ENCODE measurements at regions of chr4 and their contacts with region 1.

Region 1: GRCh38 chr4:89365776-89366175 is 58.2 kb upstream of the GPRIN3 start:
- DNase-seq: no peak
- H3K4me3 Mint-ChIP-seq: no peak overlapping the region
- H3K27ac Mint-ChIP-seq: no peak overlapping the region
- H3K4me1 Mint-ChIP-seq: peaks cover 10% of the 10 kb centered on the region
- H3K27me3 Mint-ChIP-seq: no peaks in the 10 kb centered on the region

Region 2: GRCh38 chr4:89307446-89308160 is 58.2 kb before region 1 on chr4 and contains the start of gene GPRIN3:
- intact Hi-C with region 1: loop called (anchors 5 kb)
- DNase-seq: peak; percentile 90
- H3K4me3 Mint-ChIP-seq: peak within 1 kb of the TSS; percentile 89
- H3K27ac Mint-ChIP-seq: peak within 1 kb of the TSS; percentile 95
- H3K4me1 Mint-ChIP-seq: peaks cover 56% of the 10 kb centered on the region
- H3K27me3 Mint-ChIP-seq: no peaks in the 10 kb centered on the region
- total RNA-seq, gene GPRIN3: 26.2 and 26.8 TPM in 2 replicates

Region 3: DNA sequence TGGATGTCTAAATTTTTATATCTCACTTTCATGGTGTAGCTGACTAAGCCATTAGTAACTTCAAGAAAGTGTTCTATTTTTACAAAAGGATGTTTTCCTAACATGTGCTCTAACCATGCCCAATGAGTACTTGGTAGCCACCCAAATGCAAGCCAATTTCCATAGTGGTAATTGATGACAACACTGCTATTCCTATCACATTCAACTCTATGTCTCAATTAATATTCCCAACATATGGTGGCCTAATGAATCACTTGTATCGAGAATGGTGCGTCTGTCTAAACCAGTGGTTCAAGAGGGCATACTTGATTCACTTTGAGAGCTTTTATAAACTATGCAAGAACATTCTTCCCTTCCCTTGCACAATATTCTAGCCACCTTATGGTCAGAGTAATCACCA is 54.7 kb after region 1 on chr4:
- intact Hi-C with region 1: loop called (anchors 10 kb)
- DNase-seq: no peak
- H3K4me3 Mint-ChIP-seq: no peak overlapping the region
- H3K27ac Mint-ChIP-seq: no peak overlapping the region
- H3K4me1 Mint-ChIP-seq: no peaks in the 10 kb centered on the region
- H3K27me3 Mint-ChIP-seq: no peaks in the 10 kb centered on the region

Measured in activated CD4-positive, alpha-beta T cell treated with anti-CD3 and anti-CD28 coated beads, Interleukin-2, amount 10 ng/mL, durations not matched to agents 24 days and 14 days (primary cell).